ENCODE measurements at regions of chr6 and their contacts with region 1.

Region 1: GRCh38 chr6:108238322-108238721 is 22.5 kb downstream of the SNX3 start:
- DNase-seq: no peak
- CTCF ChIP-seq: no peak

Region 2: DNA sequence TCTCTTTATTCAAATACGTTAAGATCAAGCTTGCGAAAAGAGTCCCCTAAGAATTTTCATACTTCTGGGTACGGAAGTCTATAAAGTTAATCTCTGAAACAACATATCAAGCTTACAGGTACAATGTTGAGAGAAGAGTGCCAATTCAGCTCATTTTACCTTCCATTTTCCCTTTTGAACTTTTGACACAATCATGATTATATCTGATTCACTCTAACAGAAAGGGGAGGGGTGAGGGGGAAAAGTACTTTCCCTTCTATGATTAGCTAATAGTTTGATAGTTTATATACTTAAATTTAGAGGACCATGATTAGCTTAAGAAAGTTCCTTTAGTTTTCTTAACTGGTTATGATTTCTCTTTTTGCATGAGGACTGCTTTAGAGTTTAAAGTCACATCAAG is 11.0 kb before region 1 on chr6:
- CTCF ChIA-PET with region 1: interaction called, 10 read pairs
- POLR2A ChIA-PET with region 1: no interaction called
- DNase-seq: no peak
- CTCF ChIP-seq: no peak